Endothelial cell of umbilical vein (primary cell): ENCODE measurements at regions of chr18 and their contacts with region 1.

Region 1: GRCh38 chr18:35491700-35492077 is 6.1 kb downstream of the INO80C start:
- DNase-seq: peak; percentile 47
- H3K4me3 ChIP-seq: no peak overlapping the region
- H3K27ac ChIP-seq: peak overlapping the region; percentile 28
- H3K4me1 ChIP-seq: peaks cover 42% of the 10 kb centered on the region
- H3K27me3 ChIP-seq: no peaks in the 10 kb centered on the region
- CTCF ChIP-seq: no peak
- POLR2A ChIP-seq: no peak

Region 2: DNA sequence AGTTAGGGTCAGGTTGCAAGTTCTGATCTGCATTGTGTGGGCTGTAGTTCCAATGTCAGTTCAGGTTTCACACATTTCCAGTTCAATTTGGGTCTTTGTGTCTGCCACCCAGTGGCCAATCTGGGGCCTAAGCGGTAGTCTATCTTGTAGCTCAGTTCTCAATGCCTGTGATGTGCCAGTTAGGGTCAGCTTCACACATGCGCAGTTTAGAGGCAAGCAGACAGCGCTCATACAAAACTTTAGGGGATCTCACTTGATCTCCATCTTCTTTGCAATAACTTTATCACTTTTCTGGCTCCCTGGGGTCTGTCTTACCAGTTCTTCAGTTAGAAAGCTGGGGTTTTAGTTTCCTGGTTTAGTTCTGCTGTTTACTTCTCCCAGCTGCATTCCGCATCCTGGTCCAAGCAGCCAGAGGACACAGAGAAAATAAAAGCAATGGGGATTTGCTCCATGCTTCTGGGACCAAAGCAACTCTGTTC is 136.5 kb before region 1 on chr18:
- CTCF ChIA-PET with region 1: no interaction called
- POLR2A ChIA-PET with region 1: no interaction called
- dilution Hi-C with region 1: no loop called
- intact Hi-C with region 1: no loop called
- DNase-seq: peak; percentile 86
- H3K4me3 ChIP-seq: no peak overlapping the region
- H3K27ac ChIP-seq: no peak overlapping the region
- H3K4me1 ChIP-seq: no peaks in the 10 kb centered on the region
- H3K27me3 ChIP-seq: no peaks in the 10 kb centered on the region
- CTCF ChIP-seq: peak; percentile 81 to 82
- POLR2A ChIP-seq: no peak

Region 3: GRCh38 chr18:35478520-35479435 is 12.9 kb before region 1 on chr18:
- CTCF ChIA-PET with region 1: interaction called, 23 read pairs
- POLR2A ChIA-PET with region 1: interaction called, 10 read pairs
- dilution Hi-C with region 1: no loop called
- intact Hi-C with region 1: loop called (anchors 1 kb)
- DNase-seq: peak; percentile 81
- H3K4me3 ChIP-seq: peak overlapping the region in 2 of 3 experiments; percentile 46 to 47
- H3K27ac ChIP-seq: peak overlapping the region; percentile 90
- H3K4me1 ChIP-seq: peaks cover 45% of the 10 kb centered on the region
- H3K27me3 ChIP-seq: no peaks in the 10 kb centered on the region
- CTCF ChIP-seq: no peak
- POLR2A ChIP-seq: no peak

Region 4: DNA sequence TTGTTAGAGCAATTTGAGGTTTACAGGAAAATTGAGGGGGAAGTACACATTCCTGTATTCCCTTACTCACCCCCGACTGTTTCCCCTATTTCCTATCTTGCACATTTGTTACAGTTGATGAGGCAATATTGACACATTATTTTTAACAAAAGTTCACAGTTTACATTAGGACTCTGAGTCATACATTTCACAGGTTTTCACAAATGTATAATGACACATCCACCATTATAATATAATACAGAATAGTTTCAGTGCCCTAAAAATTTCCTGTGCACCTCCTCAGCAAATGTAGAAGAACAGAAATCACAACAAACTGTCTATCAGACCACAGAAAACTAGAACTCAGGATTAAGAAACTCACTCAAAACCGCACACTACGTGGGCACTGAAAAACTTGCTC is 320.2 kb after region 1 on chr18:
- CTCF ChIA-PET with region 1: no interaction called
- POLR2A ChIA-PET with region 1: no interaction called
- dilution Hi-C with region 1: no loop called
- intact Hi-C with region 1: no loop called
- DNase-seq: peak; percentile 67
- H3K4me3 ChIP-seq: no peak overlapping the region
- H3K27ac ChIP-seq: no peak overlapping the region
- H3K4me1 ChIP-seq: peaks cover 12% of the 10 kb centered on the region
- H3K27me3 ChIP-seq: peaks cover 0 to under 1% of the 10 kb centered on the region in 2 experiments
- CTCF ChIP-seq: no peak
- POLR2A ChIP-seq: no peak